ENCODE measurements at regions of chr6 and their contacts with region 1.

Region 1: GRCh38 chr6:162187168-162187935 is 540.2 kb downstream of the PRKN start:
- DNase-seq: no peak
- H3K4me3 ChIP-seq: no peak overlapping the region
- H3K4me3 Mint-ChIP-seq: no peak overlapping the region
- H3K27ac ChIP-seq: no peak overlapping the region
- H3K27ac Mint-ChIP-seq: no peak overlapping the region
- H3K4me1 ChIP-seq: no peaks in the 10 kb centered on the region
- H3K4me1 Mint-ChIP-seq: no peaks in the 10 kb centered on the region
- H3K27me3 ChIP-seq: no peaks in the 10 kb centered on the region
- H3K27me3 Mint-ChIP-seq: no peaks in the 10 kb centered on the region

Region 2: GRCh38 chr6:162198925-162199324 is 11.6 kb after region 1 on chr6:
- CTCF ChIA-PET with region 1: no interaction called
- POLR2A ChIA-PET with region 1: no interaction called
- DNase-seq: no peak
- H3K4me3 ChIP-seq: no peak overlapping the region
- H3K4me3 Mint-ChIP-seq: no peak overlapping the region
- H3K27ac ChIP-seq: no peak overlapping the region
- H3K27ac Mint-ChIP-seq: no peak overlapping the region
- H3K4me1 ChIP-seq: no peaks in the 10 kb centered on the region
- H3K4me1 Mint-ChIP-seq: no peaks in the 10 kb centered on the region
- H3K27me3 ChIP-seq: no peaks in the 10 kb centered on the region
- H3K27me3 Mint-ChIP-seq: no peaks in the 10 kb centered on the region

Region 3: GRCh38 chr6:162363757-162364156 is 176.4 kb after region 1 on chr6:
- CTCF ChIA-PET with region 1: no interaction called
- POLR2A ChIA-PET with region 1: interaction called, 13 read pairs
- DNase-seq: no peak
- H3K4me3 ChIP-seq: no peak overlapping the region
- H3K4me3 Mint-ChIP-seq: no peak overlapping the region
- H3K27ac ChIP-seq: no peak overlapping the region
- H3K27ac Mint-ChIP-seq: no peak overlapping the region
- H3K4me1 ChIP-seq: no peaks in the 10 kb centered on the region
- H3K4me1 Mint-ChIP-seq: no peaks in the 10 kb centered on the region
- H3K27me3 ChIP-seq: no peaks in the 10 kb centered on the region
- H3K27me3 Mint-ChIP-seq: no peaks in the 10 kb centered on the region

Measured in CD8-positive, alpha-beta memory T cell (primary cell).